Activated CD4-positive, alpha-beta T cell treated with anti-CD3 and anti-CD28 coated beads for 36 hours (primary cell): ENCODE measurements at regions of chr5 and their contacts with region 1.

Region 1: GRCh38 chr5:157219491-157220271 is 39.0 kb downstream of the ITK start:
- DNase-seq: peak; percentile 62
- ATAC-seq: peak; percentile 63
- H3K4me3 Mint-ChIP-seq: peak overlapping the region; percentile 33
- H3K27ac Mint-ChIP-seq: peak overlapping the region; percentile 93
- H3K4me1 Mint-ChIP-seq: peaks cover 90% of the 10 kb centered on the region
- H3K27me3 Mint-ChIP-seq: no peaks in the 10 kb centered on the region

Region 2: DNA sequence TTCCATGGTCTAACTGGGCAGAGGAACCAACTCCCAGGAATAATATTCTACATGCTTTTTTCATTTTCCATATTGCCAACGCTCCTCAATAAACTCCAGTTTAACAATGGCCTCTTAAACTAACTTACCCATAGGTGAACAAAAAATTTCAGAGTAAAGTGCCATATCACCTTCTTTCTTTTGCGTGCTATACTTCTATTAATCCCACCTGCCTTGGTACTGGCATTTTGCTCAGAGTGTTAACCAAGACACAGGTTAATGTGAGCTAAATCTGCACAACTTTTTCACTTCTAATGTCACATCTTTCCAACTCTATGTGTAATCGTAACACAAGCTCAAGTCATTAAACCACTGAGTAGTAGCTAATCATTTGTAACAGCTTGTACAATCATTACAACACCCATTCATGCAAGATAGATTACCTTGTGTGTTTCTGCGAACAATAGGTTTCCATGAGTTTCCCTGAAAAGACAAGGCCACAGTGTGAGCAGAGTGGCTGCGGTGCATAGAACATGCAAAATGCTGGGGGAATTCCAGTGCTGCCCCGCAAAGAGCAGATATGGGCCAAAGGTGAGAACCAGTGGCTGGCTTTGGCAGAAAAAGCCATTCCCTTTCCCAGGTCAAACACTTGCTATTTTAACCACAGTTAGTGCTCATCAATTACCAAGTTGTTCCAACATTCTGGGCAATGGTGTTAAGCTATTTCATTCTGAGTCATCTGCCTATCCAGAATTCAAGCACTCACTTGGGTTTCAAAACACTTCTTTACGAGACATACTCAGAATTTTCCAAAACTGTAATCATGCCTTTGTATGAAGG is 299.4 kb before region 1 on chr5:
- CTCF ChIA-PET with region 1: no interaction called
- POLR2A ChIA-PET with region 1: interaction called, 3 read pairs
- intact Hi-C with region 1: loop called (anchors 2 to 5 kb)
- DNase-seq: peak; percentile 84
- ATAC-seq: peak; percentile 75
- H3K4me3 Mint-ChIP-seq: peak overlapping the region; percentile 58
- H3K27ac Mint-ChIP-seq: peak overlapping the region; percentile 97
- H3K4me1 Mint-ChIP-seq: peaks cover 52% of the 10 kb centered on the region
- H3K27me3 Mint-ChIP-seq: no peaks in the 10 kb centered on the region

Region 3: DNA sequence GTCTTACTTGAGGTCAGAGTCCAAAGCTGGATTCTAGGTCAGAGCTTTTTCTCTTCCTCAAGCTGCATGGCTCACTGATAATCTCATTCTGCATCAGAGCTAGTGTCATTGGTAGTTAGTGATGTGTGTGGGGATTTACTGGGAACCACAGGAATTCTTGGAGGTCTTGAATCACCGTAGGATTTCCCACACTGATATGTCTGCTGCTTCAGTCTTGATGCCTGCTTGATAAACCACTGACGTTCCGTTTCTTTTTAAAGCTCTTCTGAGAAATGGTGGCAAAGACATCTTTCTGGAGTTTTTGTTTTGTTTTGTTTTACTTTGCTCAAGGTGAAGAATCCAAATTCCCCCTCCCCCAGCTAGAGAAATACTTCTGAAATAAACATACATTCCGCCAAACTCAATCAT is 52.5 kb before region 1 on chr5:
- CTCF ChIA-PET with region 1: interaction called, 5 read pairs
- POLR2A ChIA-PET with region 1: interaction called, 10 read pairs
- intact Hi-C with region 1: loop called in 1 of 2 experiments (anchors 1 kb)
- DNase-seq: no peak
- ATAC-seq: peak; percentile 74
- H3K4me3 Mint-ChIP-seq: peak overlapping the region; percentile 47
- H3K27ac Mint-ChIP-seq: peak overlapping the region; percentile 88
- H3K4me1 Mint-ChIP-seq: peaks cover 76% of the 10 kb centered on the region
- H3K27me3 Mint-ChIP-seq: no peaks in the 10 kb centered on the region

Region 4: DNA sequence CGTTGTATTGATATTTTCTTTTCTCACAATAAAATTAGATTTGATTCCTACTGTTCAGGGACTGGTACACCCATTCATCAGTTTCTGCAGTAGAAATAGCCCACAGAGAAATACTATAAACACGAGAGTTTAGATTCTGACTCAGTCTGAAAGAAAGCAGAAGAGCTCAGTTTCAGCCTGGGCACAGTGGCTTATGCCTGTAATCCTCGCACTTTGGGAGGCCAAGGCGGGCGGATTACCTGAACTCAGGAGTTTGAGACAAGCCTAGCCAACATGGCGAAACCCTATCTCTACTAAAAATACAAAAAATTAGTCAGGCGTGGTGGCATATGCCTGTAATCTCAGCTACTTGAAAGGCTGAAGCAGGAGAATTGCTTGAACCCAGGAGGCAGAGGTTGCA is 30.5 kb before region 1 on chr5:
- CTCF ChIA-PET with region 1: interaction called, 8 read pairs
- POLR2A ChIA-PET with region 1: interaction called, 7 read pairs
- intact Hi-C with region 1: loop called in 1 of 2 experiments (anchors 2 kb)
- DNase-seq: peak; percentile 71
- ATAC-seq: peak; percentile 59
- H3K4me3 Mint-ChIP-seq: peak overlapping the region; percentile 93
- H3K27ac Mint-ChIP-seq: peak overlapping the region; percentile 96
- H3K4me1 Mint-ChIP-seq: peaks cover 75% of the 10 kb centered on the region
- H3K27me3 Mint-ChIP-seq: no peaks in the 10 kb centered on the region

Region 5: DNA sequence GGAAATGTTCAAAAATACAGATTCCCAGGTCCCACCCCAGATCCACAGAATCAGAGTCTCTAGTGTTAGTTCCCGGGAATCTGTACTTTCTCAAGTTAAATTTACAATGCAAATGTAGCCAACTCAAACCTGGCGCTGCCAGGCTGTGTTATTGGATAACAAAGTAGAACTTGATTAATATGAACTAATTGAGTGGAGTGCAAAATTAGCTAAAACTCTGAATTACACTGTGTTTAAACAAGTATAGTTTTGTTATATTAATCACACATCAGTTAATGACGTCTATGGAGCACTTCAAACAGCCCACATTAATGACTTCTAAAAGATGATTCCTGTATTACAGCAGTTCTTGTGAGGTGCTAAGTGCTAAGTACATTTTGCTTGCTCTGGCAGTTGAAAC is 13.8 kb after region 1 on chr5:
- CTCF ChIA-PET with region 1: interaction called, 4 read pairs
- POLR2A ChIA-PET with region 1: interaction called, 3 read pairs
- intact Hi-C with region 1: loop called in 1 of 2 experiments (anchors 1 kb)
- DNase-seq: peak; percentile 9
- ATAC-seq: peak; percentile 52
- H3K4me3 Mint-ChIP-seq: no peak overlapping the region
- H3K27ac Mint-ChIP-seq: peak overlapping the region; percentile 85
- H3K4me1 Mint-ChIP-seq: peaks cover 71% of the 10 kb centered on the region
- H3K27me3 Mint-ChIP-seq: no peaks in the 10 kb centered on the region

Region 6: GRCh38 chr5:157265714-157266285 is 46.1 kb after region 1 on chr5 and contains the start of gene CYFIP2:
- CTCF ChIA-PET with region 1: interaction called, 3 read pairs
- POLR2A ChIA-PET with region 1: no interaction called
- intact Hi-C with region 1: loop called in 1 of 2 experiments (anchors 5 kb)
- DNase-seq: peak; percentile 91
- ATAC-seq: peak; percentile 78
- H3K4me3 Mint-ChIP-seq: peak within 1 kb of the TSS; percentile 96
- H3K27ac Mint-ChIP-seq: peak within 1 kb of the TSS; percentile 98
- H3K4me1 Mint-ChIP-seq: peaks cover 68% of the 10 kb centered on the region
- H3K27me3 Mint-ChIP-seq: no peaks in the 10 kb centered on the region
- total RNA-seq, gene CYFIP2: 277 to 526 TPM

Region 7: GRCh38 chr5:157384971-157385709 is 165.5 kb after region 1 on chr5:
- CTCF ChIA-PET with region 1: no interaction called
- POLR2A ChIA-PET with region 1: no interaction called
- intact Hi-C with region 1: no loop called
- DNase-seq: no peak
- ATAC-seq: peak; percentile 61
- H3K4me3 Mint-ChIP-seq: no peak overlapping the region
- H3K27ac Mint-ChIP-seq: no peak overlapping the region
- H3K4me1 Mint-ChIP-seq: peaks cover 15% of the 10 kb centered on the region
- H3K27me3 Mint-ChIP-seq: no peaks in the 10 kb centered on the region

Region 8: GRCh38 chr5:157858527-157859226 is 639.0 kb after region 1 on chr5 and contains the start of gene CLINT1:
- CTCF ChIA-PET with region 1: no interaction called
- POLR2A ChIA-PET with region 1: no interaction called
- intact Hi-C with region 1: loop called in 1 of 2 experiments (anchors 2 kb)
- DNase-seq: peak; percentile 94
- ATAC-seq: peak; percentile 81
- H3K4me3 Mint-ChIP-seq: peak within 1 kb of the TSS; percentile 91
- H3K27ac Mint-ChIP-seq: peak within 1 kb of the TSS; percentile 96
- H3K4me1 Mint-ChIP-seq: peaks cover 76% of the 10 kb centered on the region
- H3K27me3 Mint-ChIP-seq: no peaks in the 10 kb centered on the region
- total RNA-seq, gene CLINT1: 59.0 to 69.0 TPM